ENCODE measurements at regions of chr7 and their contacts with region 1.

Region 1: DNA sequence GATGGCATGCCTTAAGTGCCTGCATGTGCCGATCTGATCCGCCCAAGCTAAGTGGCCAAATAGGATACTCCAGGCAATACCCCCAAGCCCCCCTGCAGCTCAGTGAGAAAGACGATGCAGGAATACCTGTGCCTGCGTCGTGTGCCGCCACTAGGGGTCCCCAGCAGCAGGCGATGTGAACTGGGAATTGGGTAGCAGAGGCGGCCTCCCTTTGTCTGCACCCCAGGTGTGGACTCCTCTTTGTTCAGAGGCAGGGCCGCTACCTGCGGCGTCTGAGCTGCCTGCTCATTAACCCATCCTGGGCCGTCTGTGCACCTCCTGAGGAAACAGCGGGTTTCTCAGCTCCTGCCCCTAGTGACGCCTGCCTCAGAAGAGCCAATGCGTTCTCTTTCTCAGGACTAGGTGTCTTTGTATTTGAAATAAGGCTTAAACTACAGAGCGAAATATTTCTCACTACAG is 4.8 kb upstream of the CHN2 start:
- DNase-seq: peak; percentile 97
- ATAC-seq: peak; percentile 87
- H3K4me3 Mint-ChIP-seq: peak overlapping the region; percentile 46
- H3K27ac Mint-ChIP-seq: peak overlapping the region; percentile 45; the same call in 1 of the 2 replicates
- H3K4me1 Mint-ChIP-seq: peaks cover 46% of the 10 kb centered on the region
- H3K27me3 Mint-ChIP-seq: peaks cover 48% of the 10 kb centered on the region
- CTCF ChIP-seq: peak; percentile 87

Region 2: DNA sequence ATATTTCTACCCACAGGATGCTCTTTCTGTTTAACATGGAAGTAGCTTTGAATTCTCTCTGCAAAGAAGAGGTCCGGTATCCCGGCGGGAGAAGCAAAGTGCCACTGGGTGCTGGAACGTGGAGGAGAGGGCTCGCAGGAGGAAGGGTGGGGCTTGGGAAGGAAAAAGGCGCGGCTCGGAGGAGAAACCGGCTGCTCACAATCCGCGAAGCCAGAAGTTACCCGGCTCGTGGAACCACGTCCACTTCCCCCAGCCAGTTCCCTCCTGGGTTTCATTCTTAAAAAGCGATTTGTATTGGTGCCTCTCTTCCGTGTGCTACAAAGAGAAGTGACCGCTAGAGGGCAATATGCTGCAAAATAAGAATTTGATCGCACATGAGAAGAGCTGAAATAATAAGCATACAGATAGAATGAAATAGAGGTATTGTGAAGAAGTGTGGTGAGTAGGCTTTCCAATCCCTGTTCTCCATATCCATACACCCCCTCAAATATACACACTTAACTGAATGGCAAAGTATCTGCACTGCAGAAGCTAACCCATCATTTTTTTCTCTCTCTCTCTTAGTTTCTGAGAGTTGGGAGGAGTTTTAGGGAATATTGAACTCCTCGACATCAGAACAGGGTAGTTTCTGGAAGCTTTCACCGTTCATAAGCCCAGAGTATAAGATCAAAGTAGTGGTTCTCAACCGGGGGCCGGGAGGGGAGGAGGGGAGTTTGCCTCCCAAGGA is 262.7 kb before region 1 on chr7:
- CTCF ChIA-PET with region 1: interaction called, 27 read pairs
- POLR2A ChIA-PET with region 1: no interaction called
- DNase-seq: peak; percentile 68
- ATAC-seq: peak; percentile 84
- H3K4me3 Mint-ChIP-seq: peak overlapping the region; percentile 74
- H3K27ac Mint-ChIP-seq: no peak overlapping the region
- H3K4me1 Mint-ChIP-seq: peaks cover 41% of the 10 kb centered on the region
- H3K27me3 Mint-ChIP-seq: peaks cover 8% of the 10 kb centered on the region
- CTCF ChIP-seq: peak; percentile 75

Region 3: GRCh38 chr7:29123626-29124190 is 66.1 kb before region 1 on chr7:
- CTCF ChIA-PET with region 1: interaction called, 16 read pairs
- POLR2A ChIA-PET with region 1: no interaction called
- DNase-seq: no peak
- ATAC-seq: no peak
- H3K4me3 Mint-ChIP-seq: no peak overlapping the region
- H3K27ac Mint-ChIP-seq: no peak overlapping the region
- H3K4me1 Mint-ChIP-seq: peaks cover 43% of the 10 kb centered on the region
- H3K27me3 Mint-ChIP-seq: no peaks in the 10 kb centered on the region; the same call in 1 of the 2 replicates
- CTCF ChIP-seq: no peak

Region 4: GRCh38 chr7:29177963-29178600 is 11.7 kb before region 1 on chr7:
- CTCF ChIA-PET with region 1: interaction called, 14 read pairs
- POLR2A ChIA-PET with region 1: no interaction called
- DNase-seq: no peak
- ATAC-seq: no peak
- H3K4me3 Mint-ChIP-seq: no peak overlapping the region
- H3K27ac Mint-ChIP-seq: no peak overlapping the region
- H3K4me1 Mint-ChIP-seq: no peaks in the 10 kb centered on the region
- H3K27me3 Mint-ChIP-seq: no peaks in the 10 kb centered on the region
- CTCF ChIP-seq: no peak

Region 5: DNA sequence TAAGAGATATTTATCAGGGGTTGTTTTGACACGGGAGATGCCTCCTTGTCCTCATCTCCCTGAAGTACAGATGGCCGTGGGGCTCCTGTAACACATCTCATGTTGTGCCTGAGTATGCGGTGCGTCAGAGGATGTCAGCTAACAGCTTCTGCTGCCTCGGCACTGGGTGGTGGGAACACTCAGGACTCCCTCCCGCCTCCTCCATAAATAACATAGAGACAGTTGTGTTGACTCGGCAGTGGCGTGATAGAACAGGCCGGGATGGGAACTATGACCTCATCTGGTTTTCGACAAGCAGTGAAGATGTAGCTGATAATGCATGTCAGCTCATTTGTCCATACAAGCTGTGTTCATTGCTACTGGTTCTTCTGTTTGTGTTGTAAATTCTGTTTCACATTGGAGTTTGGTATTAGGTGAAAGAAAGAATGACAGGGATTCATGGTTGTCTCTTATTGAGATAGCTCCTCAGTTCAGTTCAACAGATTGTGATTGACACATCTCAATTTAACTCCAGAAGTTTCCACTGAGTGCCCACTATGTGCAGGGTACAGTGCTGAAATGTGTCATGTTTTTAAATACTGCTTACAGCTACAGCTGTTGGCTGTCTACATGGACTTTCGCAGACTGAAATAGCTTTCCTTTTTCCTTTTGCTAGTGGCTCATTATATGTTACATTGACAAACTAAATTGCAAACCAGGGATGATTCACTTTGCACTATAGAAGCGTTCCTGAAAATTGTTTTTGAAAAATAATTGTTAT is 92.2 kb after region 1 on chr7:
- CTCF ChIA-PET with region 1: interaction called, 11 read pairs
- POLR2A ChIA-PET with region 1: no interaction called
- DNase-seq: no peak
- ATAC-seq: no peak
- H3K4me3 Mint-ChIP-seq: no peak overlapping the region
- H3K27ac Mint-ChIP-seq: no peak overlapping the region
- H3K4me1 Mint-ChIP-seq: peaks cover 23% of the 10 kb centered on the region
- H3K27me3 Mint-ChIP-seq: no peaks in the 10 kb centered on the region
- CTCF ChIP-seq: no peak

Region 6: GRCh38 chr7:29345600-29345999 is 155.8 kb after region 1 on chr7:
- CTCF ChIA-PET with region 1: interaction called, 44 read pairs
- POLR2A ChIA-PET with region 1: interaction called, 4 read pairs
- DNase-seq: peak; percentile 66
- ATAC-seq: peak; percentile 90
- H3K4me3 Mint-ChIP-seq: no peak overlapping the region
- H3K27ac Mint-ChIP-seq: no peak overlapping the region
- H3K4me1 Mint-ChIP-seq: no peaks in the 10 kb centered on the region
- H3K27me3 Mint-ChIP-seq: peaks cover 4% of the 10 kb centered on the region; the same call in 1 of the 2 replicates
- CTCF ChIP-seq: 0 out of 2 replicates have a peak, but pooled peaks have one; percentile 18

Measured in WTC11 (cell line).